ENCODE measurements at regions of chr2 and their contacts with region 1.

Region 1: GRCh38 chr2:10832203-10832936 is 19.8 kb upstream of the PDIA6 start:
- DNase-seq: peak; percentile 87 to 88
- ATAC-seq: peak; percentile 72 to 91
- H3K4me3 ChIP-seq: no peak overlapping the region
- H3K27ac ChIP-seq: peak overlapping the region in 1 of 2 experiments; percentile 43; a peak in 1 of 6 replicates
- H3K4me1 ChIP-seq: no peaks in the 10 kb centered on the region
- CTCF ChIP-seq: peak; percentile 99
- EP300 ChIP-seq: no peak
- POLR2A ChIP-seq: no peak
- RAD21 ChIP-seq: peak; percentile 99 to 100

Region 2: GRCh38 chr2:10821296-10821695 is 11.1 kb before region 1 on chr2:
- CTCF ChIA-PET with region 1: interaction called, 85 read pairs
- POLR2A ChIA-PET with region 1: no interaction called
- DNase-seq: no peak
- ATAC-seq: no peak
- H3K4me3 ChIP-seq: no peak overlapping the region
- H3K27ac ChIP-seq: no peak overlapping the region
- H3K4me1 ChIP-seq: no peaks in the 10 kb centered on the region
- CTCF ChIP-seq: no peak
- EP300 ChIP-seq: no peak
- POLR2A ChIP-seq: no peak
- RAD21 ChIP-seq: no peak

Region 3: DNA sequence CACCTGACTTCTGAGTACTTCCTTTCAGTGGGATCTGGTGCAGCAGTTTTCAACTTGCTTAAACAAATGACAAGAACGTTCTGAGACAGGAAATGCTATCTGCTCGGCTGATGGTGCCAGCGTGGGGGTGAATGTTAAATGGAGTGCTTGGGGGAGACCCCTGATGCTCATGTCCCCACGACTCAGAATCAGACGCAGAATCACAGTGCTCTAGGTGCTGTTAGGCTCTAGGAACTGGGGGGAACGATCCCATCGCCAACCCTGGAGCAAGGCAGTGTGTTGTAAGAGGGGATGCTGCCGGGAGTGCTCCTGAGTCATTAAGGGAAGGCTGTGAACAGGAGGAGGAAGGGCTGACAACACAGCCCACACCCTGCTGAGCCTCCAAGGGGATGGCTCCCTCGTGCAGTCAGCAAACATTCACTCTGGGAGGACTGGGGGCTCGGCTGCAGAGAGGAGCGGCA is 45.3 kb after region 1 on chr2:
- CTCF ChIA-PET with region 1: interaction called, 18 read pairs
- POLR2A ChIA-PET with region 1: no interaction called
- DNase-seq: no peak
- ATAC-seq: peak in 1 of 2 experiments; percentile 55; a peak in 3 of 6 replicates
- H3K4me3 ChIP-seq: no peak overlapping the region
- H3K27ac ChIP-seq: no peak overlapping the region
- H3K4me1 ChIP-seq: no peaks in the 10 kb centered on the region
- CTCF ChIP-seq: no peak
- EP300 ChIP-seq: no peak
- POLR2A ChIP-seq: no peak
- RAD21 ChIP-seq: no peak

Region 4: DNA sequence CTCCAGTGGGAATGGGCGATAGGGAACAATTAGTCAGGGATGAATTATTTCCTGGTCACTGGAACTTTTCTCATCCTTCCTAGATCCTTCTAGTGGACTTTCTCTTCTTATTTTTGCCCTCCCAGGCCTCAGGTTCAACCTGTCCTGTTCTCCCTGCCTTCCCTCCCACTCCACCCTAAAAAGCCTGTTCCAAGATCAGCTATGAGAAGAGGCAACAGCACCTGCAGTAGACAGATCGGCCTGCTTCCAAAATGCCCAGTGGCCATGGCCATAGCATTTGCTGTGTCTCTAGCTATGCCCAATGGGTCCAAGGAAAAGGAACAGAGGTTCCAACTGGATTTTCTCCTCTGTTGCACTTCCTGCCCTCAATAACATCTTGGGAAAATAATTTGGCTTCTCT is 62.9 kb after region 1 on chr2:
- CTCF ChIA-PET with region 1: interaction called, 29 read pairs
- POLR2A ChIA-PET with region 1: no interaction called
- DNase-seq: no peak
- ATAC-seq: no peak
- H3K4me3 ChIP-seq: no peak overlapping the region
- H3K27ac ChIP-seq: no peak overlapping the region
- H3K4me1 ChIP-seq: peaks cover 5% of the 10 kb centered on the region
- CTCF ChIP-seq: no peak
- EP300 ChIP-seq: no peak
- POLR2A ChIP-seq: no peak
- RAD21 ChIP-seq: no peak

Region 5: GRCh38 chr2:10971881-10972260 is 139.5 kb after region 1 on chr2:
- CTCF ChIA-PET with region 1: interaction called, 10 read pairs
- POLR2A ChIA-PET with region 1: no interaction called
- DNase-seq: no peak
- ATAC-seq: no peak; a peak in 1 of 6 replicates
- H3K4me3 ChIP-seq: no peak overlapping the region
- H3K27ac ChIP-seq: no peak overlapping the region
- H3K4me1 ChIP-seq: no peaks in the 10 kb centered on the region
- CTCF ChIP-seq: no peak
- EP300 ChIP-seq: no peak
- POLR2A ChIP-seq: no peak
- RAD21 ChIP-seq: no peak

Region 6: DNA sequence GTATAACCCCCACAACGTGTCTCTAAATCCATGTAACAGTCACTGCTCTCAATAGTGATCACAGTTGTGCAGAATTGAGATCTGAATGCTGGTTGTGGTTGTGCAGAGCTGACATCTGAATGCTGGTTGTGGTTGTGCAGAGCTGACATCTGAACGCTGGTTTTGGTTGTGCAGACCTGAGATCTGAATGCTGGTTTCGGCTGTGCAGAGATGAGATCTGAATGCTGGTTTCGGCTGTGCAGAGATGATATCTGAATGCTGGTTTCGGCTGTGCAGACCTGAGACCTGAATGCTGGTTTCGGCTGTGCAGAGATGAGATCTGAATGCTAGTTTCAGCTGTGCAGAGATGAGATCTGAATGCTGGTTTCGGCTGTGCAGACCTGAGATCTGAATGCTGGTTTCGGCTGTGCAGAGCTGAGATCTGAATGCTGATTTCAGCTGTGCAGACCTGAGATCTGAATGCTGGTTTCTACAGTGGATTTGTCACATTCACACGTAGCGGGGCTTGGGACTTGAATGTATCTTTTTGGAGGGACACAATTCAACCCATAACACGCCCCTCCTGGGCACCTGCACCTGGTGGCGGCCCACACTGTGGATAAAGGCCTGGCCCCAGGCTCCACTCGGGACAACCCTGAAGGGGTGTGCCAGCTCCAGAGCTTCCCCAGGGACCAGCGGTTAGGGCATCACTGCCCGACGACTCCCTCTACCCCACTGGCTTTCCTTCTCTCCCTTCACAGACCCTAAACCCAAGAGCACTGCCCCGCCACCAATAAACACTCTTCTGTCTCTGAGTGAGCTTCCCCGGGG is 271.8 kb after region 1 on chr2:
- CTCF ChIA-PET with region 1: interaction called, 14 read pairs
- POLR2A ChIA-PET with region 1: no interaction called
- DNase-seq: no peak
- ATAC-seq: no peak
- H3K4me3 ChIP-seq: no peak overlapping the region
- H3K27ac ChIP-seq: no peak overlapping the region
- H3K4me1 ChIP-seq: no peaks in the 10 kb centered on the region
- CTCF ChIP-seq: no peak
- EP300 ChIP-seq: no peak
- POLR2A ChIP-seq: no peak
- RAD21 ChIP-seq: no peak

Region 7: GRCh38 chr2:11145350-11145749 is 313.0 kb after region 1 on chr2:
- CTCF ChIA-PET with region 1: interaction called, 16 read pairs
- POLR2A ChIA-PET with region 1: no interaction called
- DNase-seq: no peak
- ATAC-seq: 0 out of 6 replicates have a peak, but pooled peaks of 1 of the 2 experiments have one; percentile 14
- H3K4me3 ChIP-seq: no peak overlapping the region
- H3K27ac ChIP-seq: no peak overlapping the region
- H3K4me1 ChIP-seq: 0 out of 3 replicates have a peak, but pooled peaks cover 4% of the 10 kb centered on the region
- CTCF ChIP-seq: no peak
- EP300 ChIP-seq: no peak
- POLR2A ChIP-seq: no peak
- RAD21 ChIP-seq: no peak